GM12878 (cell line): ENCODE measurements at regions of chr1 and their contacts with region 1.

Region 1: GRCh38 chr1:151739590-151740375 is 18.5 kb downstream of the RIIAD1 start:
- DNase-seq: no peak
- ATAC-seq: no peak
- H3K4me3 ChIP-seq: no peak overlapping the region
- H3K27ac ChIP-seq: no peak overlapping the region
- H3K4me1 ChIP-seq: no peaks in the 10 kb centered on the region
- H3K27me3 ChIP-seq: no peaks in the 10 kb centered on the region; a peak in 1 of 4 replicates
- CTCF ChIP-seq: no peak
- EP300 ChIP-seq: no peak
- POLR2A ChIP-seq: no peak
- RAD21 ChIP-seq: no peak

Region 2: DNA sequence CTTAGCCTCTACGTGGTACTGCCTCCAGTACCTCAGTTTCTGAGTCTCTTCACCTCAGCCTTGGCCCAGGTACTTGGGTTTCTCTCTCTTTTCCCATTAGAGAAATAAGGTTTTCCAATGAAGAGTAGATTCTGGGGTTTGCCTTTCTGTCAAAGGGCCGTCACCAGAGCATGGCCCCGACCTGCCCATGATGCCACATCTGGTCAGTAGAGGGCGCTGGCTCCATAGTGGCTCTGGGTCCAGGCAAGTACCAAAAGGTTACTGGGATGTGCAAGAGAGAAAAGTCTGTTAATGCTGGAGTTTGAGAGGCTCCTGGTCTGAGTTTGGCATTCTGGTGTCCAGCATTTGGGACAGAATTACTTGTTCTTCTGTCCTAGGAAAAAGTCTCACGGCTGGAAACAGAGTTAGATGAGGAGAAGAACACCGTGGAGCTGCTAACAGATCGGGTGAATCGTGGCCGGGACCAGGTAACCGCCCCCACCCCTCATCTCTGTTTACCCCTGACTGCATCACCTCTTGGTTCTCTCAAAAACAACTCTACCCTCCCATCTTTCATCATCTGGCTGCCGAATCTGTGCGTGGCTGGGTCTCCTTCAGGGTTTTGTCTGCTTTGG is 205.0 kb before region 1 on chr1:
- CTCF ChIA-PET with region 1: interaction called, 7 read pairs
- POLR2A ChIA-PET with region 1: no interaction called
- RAD21 ChIA-PET with region 1: no interaction called
- SMC1A ChIA-PET with region 1: interaction called, 4 read pairs
- in situ Hi-C with region 1: no loop called
- intact Hi-C with region 1: loop called (anchors 2 kb)
- DNase-seq: no peak
- ATAC-seq: peak; percentile 91
- H3K4me3 ChIP-seq: no peak overlapping the region
- H3K27ac ChIP-seq: no peak overlapping the region
- H3K4me1 ChIP-seq: peaks cover 6% of the 10 kb centered on the region
- H3K27me3 ChIP-seq: no peaks in the 10 kb centered on the region
- CTCF ChIP-seq: peak; percentile 83 to 95 (median 92)
- EP300 ChIP-seq: no peak
- POLR2A ChIP-seq: no peak
- RAD21 ChIP-seq: peak; percentile 90

Region 3: DNA sequence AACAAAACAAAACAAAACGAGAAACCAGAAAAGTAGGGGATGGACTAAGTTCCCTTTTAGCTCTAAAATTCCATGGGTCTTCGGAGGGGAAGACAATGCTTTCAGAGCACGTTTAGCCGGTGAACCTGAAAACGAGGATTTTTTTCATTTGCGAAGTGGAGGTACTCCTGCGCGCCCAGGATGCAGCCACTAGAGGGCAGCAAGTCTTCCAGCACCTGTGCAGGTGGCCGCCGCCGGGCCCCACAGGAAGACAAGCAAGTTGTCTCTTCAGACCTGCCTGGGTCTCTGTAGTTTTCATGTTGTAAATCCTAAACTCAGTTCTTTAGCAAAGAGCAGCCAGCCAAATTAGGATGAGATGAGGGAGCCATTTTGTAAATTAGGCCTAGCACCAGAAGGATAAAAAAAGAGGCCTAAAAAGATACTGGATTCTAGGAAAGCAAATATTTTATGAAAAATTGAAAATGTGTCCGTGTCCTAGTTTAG is 145.6 kb before region 1 on chr1:
- CTCF ChIA-PET with region 1: interaction called, 18 read pairs
- POLR2A ChIA-PET with region 1: interaction called, 3 read pairs
- RAD21 ChIA-PET with region 1: interaction called, 9 read pairs
- SMC1A ChIA-PET with region 1: interaction called, 15 read pairs
- in situ Hi-C with region 1: loop called (anchors 5 kb)
- intact Hi-C with region 1: loop called (anchors 1 kb)
- DNase-seq: no peak
- ATAC-seq: peak; percentile 99
- H3K4me3 ChIP-seq: no peak overlapping the region
- H3K27ac ChIP-seq: no peak overlapping the region
- H3K4me1 ChIP-seq: no peaks in the 10 kb centered on the region
- H3K27me3 ChIP-seq: no peaks in the 10 kb centered on the region; a peak in 1 of 4 replicates
- CTCF ChIP-seq: peak; percentile 95 to 97 (median 95)
- EP300 ChIP-seq: no peak
- POLR2A ChIP-seq: no peak
- RAD21 ChIP-seq: peak; percentile 81

Region 4: DNA sequence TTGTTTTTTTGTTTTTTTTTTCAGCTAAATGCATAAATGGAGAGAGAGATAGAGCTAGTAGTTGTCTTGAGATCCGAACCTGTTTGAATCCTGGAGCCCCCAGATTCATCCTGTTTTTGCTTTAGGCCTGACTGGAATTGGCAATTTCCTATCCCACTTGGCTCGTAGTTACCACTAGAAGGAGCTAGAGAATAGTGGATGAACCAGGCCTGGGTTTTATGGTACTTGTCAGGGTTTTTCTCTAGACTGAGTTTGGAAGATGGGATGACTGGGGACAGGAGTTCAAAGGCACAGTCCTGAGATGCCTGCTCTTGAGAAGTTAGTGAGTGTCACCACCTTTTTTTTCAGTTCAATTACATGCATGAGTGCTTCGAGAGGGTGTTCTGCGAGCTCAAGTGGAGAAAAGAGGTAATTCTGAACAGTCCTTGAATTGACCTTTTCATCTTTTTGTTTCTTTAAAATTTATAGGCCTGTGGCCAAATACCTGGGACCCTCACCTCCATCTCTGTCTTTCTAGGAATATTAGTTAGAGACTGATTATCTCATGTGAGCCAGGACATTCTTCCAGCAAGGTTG is 46.6 kb before region 1 on chr1:
- CTCF ChIA-PET with region 1: interaction called, 16 read pairs
- POLR2A ChIA-PET with region 1: no interaction called
- RAD21 ChIA-PET with region 1: interaction called, 5 read pairs
- SMC1A ChIA-PET with region 1: interaction called, 6 read pairs
- in situ Hi-C with region 1: loop called (anchors 5 kb)
- intact Hi-C with region 1: loop called (anchors 2 kb)
- DNase-seq: no peak
- ATAC-seq: no peak
- H3K4me3 ChIP-seq: no peak overlapping the region
- H3K27ac ChIP-seq: no peak overlapping the region
- H3K4me1 ChIP-seq: no peaks in the 10 kb centered on the region
- H3K27me3 ChIP-seq: no peaks in the 10 kb centered on the region
- CTCF ChIP-seq: peak; percentile 54 to 66 (median 61); a peak in 5 of 6 replicates
- EP300 ChIP-seq: no peak
- POLR2A ChIP-seq: no peak
- RAD21 ChIP-seq: peak; percentile 79

Region 5: GRCh38 chr1:151720974-151721787 is 18.6 kb before region 1 on chr1 and contains the start of gene RIIAD1:
- CTCF ChIA-PET with region 1: interaction called, 11 read pairs
- POLR2A ChIA-PET with region 1: no interaction called
- RAD21 ChIA-PET with region 1: interaction called, 3 read pairs
- SMC1A ChIA-PET with region 1: interaction called, 8 read pairs
- in situ Hi-C with region 1: no loop called
- intact Hi-C with region 1: no loop called
- DNase-seq: no peak
- ATAC-seq: peak; percentile 92
- H3K4me3 ChIP-seq: peak within 1 kb of the TSS; percentile 76
- H3K27ac ChIP-seq: peak within 1 kb of the TSS; percentile 68
- H3K4me1 ChIP-seq: peaks cover 16% of the 10 kb centered on the region
- H3K27me3 ChIP-seq: peaks cover 3 to 6% of the 10 kb centered on the region in 2 experiments
- CTCF ChIP-seq: no peak
- EP300 ChIP-seq: no peak
- POLR2A ChIP-seq: no peak
- RAD21 ChIP-seq: no peak
- polyA plus RNA-seq, gene RIIAD1: not detected

Region 6: DNA sequence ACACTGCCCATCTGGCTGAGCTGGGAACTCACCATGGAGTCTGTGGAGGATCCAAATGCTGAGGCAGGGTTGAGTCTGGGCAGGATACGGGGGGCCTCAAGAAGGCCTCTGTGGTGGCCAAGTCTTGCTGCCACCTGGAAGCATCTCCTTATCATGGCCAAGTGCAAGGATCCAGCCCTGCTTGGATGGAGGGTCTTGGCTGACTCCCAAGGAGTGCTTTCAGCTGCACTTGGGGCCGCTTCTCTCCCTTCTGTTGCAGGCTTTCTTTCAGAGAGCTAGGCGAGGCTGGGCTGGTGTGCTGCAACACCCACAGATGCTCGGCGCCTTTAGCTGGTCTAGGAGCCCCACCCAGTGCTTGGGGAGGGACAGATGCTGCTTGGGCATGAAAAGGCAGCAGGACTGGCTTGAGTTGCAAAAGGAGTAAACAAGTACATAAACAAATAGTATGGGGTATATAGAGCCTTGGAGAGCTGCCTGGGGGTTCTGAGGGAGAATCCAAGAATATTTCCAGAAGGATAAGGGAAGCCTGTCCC is 113.7 kb after region 1 on chr1 and contains the start of gene THEM5:
- CTCF ChIA-PET with region 1: no interaction called
- POLR2A ChIA-PET with region 1: no interaction called
- RAD21 ChIA-PET with region 1: no interaction called
- SMC1A ChIA-PET with region 1: no interaction called
- in situ Hi-C with region 1: no loop called
- intact Hi-C with region 1: no loop called
- DNase-seq: no peak
- ATAC-seq: peak; percentile 36; the same call in 1 of the 3 replicates
- H3K4me3 ChIP-seq: no peak within 1 kb of the TSS
- H3K27ac ChIP-seq: no peak within 1 kb of the TSS
- H3K4me1 ChIP-seq: no peaks in the 10 kb centered on the region
- H3K27me3 ChIP-seq: peaks cover 0 to 3% of the 10 kb centered on the region in 2 experiments; a peak in 1 of 4 replicates
- CTCF ChIP-seq: no peak; a peak in 1 of 6 replicates
- EP300 ChIP-seq: no peak
- POLR2A ChIP-seq: no peak
- RAD21 ChIP-seq: peak; percentile 26; the same call in 1 of the 2 replicates
- polyA plus RNA-seq, gene THEM5: not detected

Region 7: GRCh38 chr1:151867785-151868411 is 128.1 kb after region 1 on chr1:
- CTCF ChIA-PET with region 1: no interaction called
- POLR2A ChIA-PET with region 1: no interaction called
- RAD21 ChIA-PET with region 1: no interaction called
- SMC1A ChIA-PET with region 1: no interaction called
- in situ Hi-C with region 1: no loop called
- intact Hi-C with region 1: no loop called
- DNase-seq: no peak
- ATAC-seq: no peak
- H3K4me3 ChIP-seq: no peak overlapping the region
- H3K27ac ChIP-seq: no peak overlapping the region
- H3K4me1 ChIP-seq: no peaks in the 10 kb centered on the region
- H3K27me3 ChIP-seq: no peaks in the 10 kb centered on the region; a peak in 1 of 4 replicates
- CTCF ChIP-seq: no peak
- EP300 ChIP-seq: no peak
- POLR2A ChIP-seq: no peak
- RAD21 ChIP-seq: no peak